Sciatic nerve (tissue), 2 donors: ENCODE measurements at regions of chr10 and their contacts with region 1.

Region 1: DNA sequence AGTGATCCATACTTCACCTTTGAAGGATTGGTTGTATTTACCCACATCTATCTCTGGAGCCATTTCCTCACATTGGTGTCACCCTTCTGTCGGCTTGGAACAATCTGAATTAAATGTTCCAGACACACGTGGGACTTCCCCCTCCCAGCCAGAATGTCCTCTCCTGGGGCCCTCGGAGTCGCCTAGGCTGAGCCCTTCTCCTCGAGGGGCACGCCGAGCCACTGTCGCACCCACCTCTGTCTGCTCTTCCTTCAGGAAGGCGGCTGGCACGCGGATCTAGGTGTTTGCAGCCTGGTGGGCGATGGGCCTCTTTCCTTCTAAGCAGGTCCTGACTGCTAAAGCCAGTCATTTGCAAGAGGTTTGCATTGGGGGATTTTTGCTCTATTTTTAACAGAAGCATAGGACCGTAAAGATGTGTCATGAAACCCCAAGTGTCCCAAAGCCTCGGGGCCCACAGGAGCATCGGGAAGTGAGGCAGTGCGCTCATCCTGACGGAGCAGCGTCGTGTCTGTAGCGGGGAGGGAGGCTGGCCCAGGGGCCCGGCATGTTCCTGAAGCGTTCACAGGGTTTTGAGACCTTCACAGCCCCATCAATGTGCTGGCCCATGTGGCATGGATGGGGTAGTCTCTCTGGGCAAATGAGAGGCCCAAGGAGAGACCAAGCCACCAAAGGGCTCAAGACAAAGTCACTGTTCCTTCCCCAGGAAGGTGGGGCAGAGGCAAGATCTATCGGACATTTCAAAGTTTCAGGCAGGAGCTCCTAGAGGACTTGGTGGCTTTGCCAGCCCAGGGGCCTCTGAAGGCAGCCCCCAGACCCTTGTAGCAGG is 86.7 kb downstream of the RGS10 start:
- DNase-seq: no peak
- ATAC-seq: no peak

Region 2: GRCh38 chr10:118585794-118586193 is 870.0 kb before region 1 on chr10:
- intact Hi-C with region 1: loop called (anchors 5 kb)
- DNase-seq: no peak
- ATAC-seq: no peak

Region 3: GRCh38 chr10:118986815-118987790 is 468.7 kb before region 1 on chr10:
- intact Hi-C with region 1: no loop called
- DNase-seq: no peak
- ATAC-seq: no peak

Region 4: GRCh38 chr10:119493155-119493554 is 37.3 kb after region 1 on chr10:
- intact Hi-C with region 1: loop called (anchors 1 kb)
- DNase-seq: no peak
- ATAC-seq: no peak